MCF 10A (cell line): ENCODE measurements at regions of chr20 and their contacts with region 1.

Region 1: DNA sequence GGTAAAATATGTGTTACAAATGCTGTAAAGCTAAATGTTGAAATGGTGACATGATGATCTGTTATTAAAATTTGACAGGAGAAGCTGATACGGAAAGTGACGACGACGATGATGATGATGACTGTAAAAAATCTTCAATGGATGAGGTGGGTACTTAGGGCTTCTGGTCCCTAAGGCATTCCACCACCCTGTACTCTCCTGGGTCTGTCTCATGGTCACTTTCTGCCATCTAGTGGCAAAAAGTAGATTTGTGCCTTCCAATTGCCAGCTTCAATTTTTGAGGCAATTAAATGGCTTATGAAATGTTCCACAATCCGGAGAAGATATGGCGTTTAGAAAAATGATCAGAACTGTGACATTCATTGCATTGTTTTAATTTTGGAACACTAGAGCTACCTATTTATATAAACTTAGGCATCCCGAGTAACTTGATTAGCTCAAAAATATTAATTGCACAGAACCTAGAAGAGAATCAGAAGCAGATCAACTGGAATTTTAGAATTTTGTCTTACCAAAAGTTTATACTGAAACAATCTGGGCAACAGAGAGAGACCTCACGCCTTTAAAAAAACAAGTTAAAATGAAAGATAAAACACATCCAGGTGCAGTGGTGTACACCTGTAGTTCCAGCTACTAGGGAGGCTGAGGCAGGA is 346.5 kb upstream of the PLCB4 start:
- DNase-seq: peak; percentile 75
- H3K4me3 Mint-ChIP-seq: no peak overlapping the region
- H3K27ac Mint-ChIP-seq: no peak overlapping the region
- H3K4me1 Mint-ChIP-seq: peaks cover 11% of the 10 kb centered on the region
- H3K27me3 Mint-ChIP-seq: no peaks in the 10 kb centered on the region
- CTCF ChIP-seq: peak; percentile 75

Region 2: GRCh38 chr20:7950387-7950786 is 772.0 kb before region 1 on chr20:
- CTCF ChIA-PET with region 1: interaction called, 12 read pairs
- POLR2A ChIA-PET with region 1: no interaction called
- intact Hi-C with region 1: no loop called
- DNase-seq: no peak
- H3K4me3 Mint-ChIP-seq: no peak overlapping the region
- H3K27ac Mint-ChIP-seq: no peak overlapping the region
- H3K4me1 Mint-ChIP-seq: no peaks in the 10 kb centered on the region
- H3K27me3 Mint-ChIP-seq: no peaks in the 10 kb centered on the region
- CTCF ChIP-seq: no peak

Region 3: GRCh38 chr20:7989379-7989778 is 733.0 kb before region 1 on chr20:
- CTCF ChIA-PET with region 1: interaction called, 35 read pairs
- POLR2A ChIA-PET with region 1: no interaction called
- intact Hi-C with region 1: no loop called
- DNase-seq: no peak
- H3K4me3 Mint-ChIP-seq: no peak overlapping the region
- H3K27ac Mint-ChIP-seq: no peak overlapping the region
- H3K4me1 Mint-ChIP-seq: no peaks in the 10 kb centered on the region
- H3K27me3 Mint-ChIP-seq: no peaks in the 10 kb centered on the region
- CTCF ChIP-seq: no peak

Region 4: GRCh38 chr20:8131598-8132483 is 590.6 kb before region 1 on chr20 and contains the start of gene PLCB1:
- CTCF ChIA-PET with region 1: interaction called, 357 read pairs
- POLR2A ChIA-PET with region 1: interaction called, 3 read pairs
- intact Hi-C with region 1: loop called (anchors 1 kb)
- DNase-seq: peak; percentile 79
- H3K4me3 Mint-ChIP-seq: peak within 1 kb of the TSS; percentile 75
- H3K27ac Mint-ChIP-seq: peak within 1 kb of the TSS; percentile 43
- H3K4me1 Mint-ChIP-seq: peaks cover 8% of the 10 kb centered on the region
- H3K27me3 Mint-ChIP-seq: peaks cover 15% of the 10 kb centered on the region
- CTCF ChIP-seq: peak; percentile 95
- total RNA-seq, gene PLCB1: 5.9 and 8.2 TPM in 2 replicates

Region 5: GRCh38 chr20:8361006-8361652 is 361.3 kb before region 1 on chr20:
- CTCF ChIA-PET with region 1: interaction called, 38 read pairs
- POLR2A ChIA-PET with region 1: no interaction called
- intact Hi-C with region 1: no loop called
- DNase-seq: peak; percentile 23
- H3K4me3 Mint-ChIP-seq: no peak overlapping the region
- H3K27ac Mint-ChIP-seq: no peak overlapping the region
- H3K4me1 Mint-ChIP-seq: no peaks in the 10 kb centered on the region
- H3K27me3 Mint-ChIP-seq: no peaks in the 10 kb centered on the region
- CTCF ChIP-seq: no peak

Region 6: DNA sequence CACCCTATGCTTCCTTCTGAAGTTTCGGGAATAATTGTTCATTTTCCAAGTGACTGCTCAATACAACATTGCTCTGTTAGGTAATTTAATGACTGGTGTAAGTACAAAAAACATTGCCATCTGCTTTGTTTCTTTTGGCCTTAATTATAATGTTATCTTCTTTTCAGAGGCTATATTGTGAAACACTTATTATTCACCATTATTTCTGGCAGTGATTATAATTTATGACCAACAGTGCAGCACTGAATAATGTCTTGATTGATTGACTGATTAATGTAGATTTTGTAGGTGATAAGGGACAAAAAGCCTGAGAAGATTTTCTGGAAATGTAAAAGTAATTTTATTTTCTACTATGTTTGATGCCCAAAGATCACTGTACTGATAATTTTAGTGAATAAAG is 212.6 kb before region 1 on chr20:
- CTCF ChIA-PET with region 1: no interaction called
- POLR2A ChIA-PET with region 1: no interaction called
- intact Hi-C with region 1: no loop called
- DNase-seq: peak; percentile 51
- H3K4me3 Mint-ChIP-seq: peak overlapping the region; percentile 59
- H3K27ac Mint-ChIP-seq: peak overlapping the region; percentile 4
- H3K4me1 Mint-ChIP-seq: peaks cover 13% of the 10 kb centered on the region
- H3K27me3 Mint-ChIP-seq: no peaks in the 10 kb centered on the region
- CTCF ChIP-seq: no peak

Region 7: DNA sequence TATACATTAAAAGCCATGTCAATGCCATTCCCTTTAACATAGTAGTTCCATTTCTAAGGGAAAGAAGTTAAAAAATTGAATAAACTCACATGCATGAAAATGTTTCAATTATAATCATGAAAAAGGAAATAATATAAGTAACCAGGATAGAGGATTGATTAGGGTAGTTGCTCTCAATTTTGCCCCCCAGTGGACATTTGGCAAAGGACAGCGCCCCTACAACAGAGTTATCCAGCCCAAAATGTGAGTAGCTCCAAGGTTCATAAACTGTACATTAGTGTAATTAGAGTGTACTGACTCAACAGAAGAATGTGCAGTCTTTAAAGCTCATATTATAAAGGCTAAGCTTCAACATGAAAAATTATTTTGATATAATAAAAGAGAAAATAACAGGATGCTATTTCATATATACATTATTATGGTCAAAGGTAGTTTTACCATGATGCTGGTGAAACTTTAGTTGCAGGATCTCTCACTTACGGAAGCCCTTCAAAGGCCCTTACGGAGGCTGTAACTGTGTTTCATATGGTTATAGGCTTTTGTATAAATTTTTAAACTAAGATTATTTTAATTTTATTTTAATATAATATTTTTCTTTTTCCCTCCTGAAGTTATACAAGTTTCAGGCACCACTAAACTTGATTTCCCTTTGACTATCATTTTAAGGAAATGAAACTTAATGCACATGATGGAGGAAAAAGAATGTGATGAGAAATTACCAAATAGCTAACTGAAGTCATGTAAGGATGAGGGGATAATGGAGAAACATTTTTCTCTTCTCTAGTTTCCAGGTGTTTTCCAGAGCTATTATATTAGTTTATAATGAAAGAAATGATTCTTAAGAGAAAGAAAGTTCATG is 186.8 kb before region 1 on chr20:
- CTCF ChIA-PET with region 1: interaction called, 35 read pairs
- POLR2A ChIA-PET with region 1: no interaction called
- intact Hi-C with region 1: loop called (anchors 5 kb)
- DNase-seq: peak; percentile 38
- H3K4me3 Mint-ChIP-seq: no peak overlapping the region
- H3K27ac Mint-ChIP-seq: no peak overlapping the region
- H3K4me1 Mint-ChIP-seq: peaks cover 5% of the 10 kb centered on the region
- H3K27me3 Mint-ChIP-seq: no peaks in the 10 kb centered on the region
- CTCF ChIP-seq: peak; percentile 42

Region 8: DNA sequence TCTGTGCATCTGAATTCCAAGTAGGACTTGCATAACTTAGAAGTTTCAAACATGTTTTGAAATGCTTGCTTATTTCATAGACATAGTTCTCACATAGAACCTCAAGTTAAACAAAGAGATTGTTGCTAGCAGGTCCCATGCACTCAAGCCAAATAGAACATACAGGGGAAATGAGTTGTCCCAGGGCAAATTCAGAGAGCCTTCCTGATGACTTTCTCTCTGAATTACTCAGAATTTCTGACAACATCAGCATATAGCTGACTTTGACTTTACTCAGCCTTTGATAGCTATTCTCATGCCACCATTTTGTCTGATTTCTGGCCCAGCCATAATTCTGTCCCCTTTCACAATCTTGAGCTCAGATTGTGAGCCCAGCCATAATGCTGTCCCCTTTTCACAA is 13.3 kb after region 1 on chr20:
- CTCF ChIA-PET with region 1: interaction called, 20 read pairs
- POLR2A ChIA-PET with region 1: no interaction called
- intact Hi-C with region 1: no loop called
- DNase-seq: no peak
- H3K4me3 Mint-ChIP-seq: no peak overlapping the region
- H3K27ac Mint-ChIP-seq: no peak overlapping the region
- H3K4me1 Mint-ChIP-seq: no peaks in the 10 kb centered on the region
- H3K27me3 Mint-ChIP-seq: no peaks in the 10 kb centered on the region
- CTCF ChIP-seq: no peak

Region 9: DNA sequence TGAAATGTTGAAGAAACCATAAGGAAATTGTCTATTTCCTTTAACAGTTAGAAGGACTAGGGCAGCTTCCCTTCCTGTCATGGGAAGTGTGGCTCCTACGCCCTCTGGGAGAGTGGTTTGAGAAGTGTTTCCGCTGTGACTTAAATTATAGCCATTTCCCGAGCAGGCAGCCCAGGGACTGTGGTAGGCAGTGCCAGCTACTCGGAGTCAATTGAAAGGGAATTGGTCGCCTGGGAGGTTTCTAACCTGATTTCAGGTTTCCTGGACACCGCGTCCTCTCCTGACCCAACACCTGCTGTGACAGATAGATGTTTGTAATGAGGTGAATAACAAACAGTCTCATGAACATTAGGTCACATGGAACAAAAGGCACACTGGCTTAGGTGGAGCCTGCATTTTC is 90.4 kb after region 1 on chr20:
- CTCF ChIA-PET with region 1: no interaction called
- POLR2A ChIA-PET with region 1: no interaction called
- intact Hi-C with region 1: no loop called
- DNase-seq: no peak
- H3K4me3 Mint-ChIP-seq: no peak overlapping the region
- H3K27ac Mint-ChIP-seq: no peak overlapping the region
- H3K4me1 Mint-ChIP-seq: no peaks in the 10 kb centered on the region
- H3K27me3 Mint-ChIP-seq: peaks cover 11% of the 10 kb centered on the region
- CTCF ChIP-seq: no peak

Region 10: GRCh38 chr20:8976303-8976702 is 253.9 kb after region 1 on chr20:
- CTCF ChIA-PET with region 1: no interaction called
- POLR2A ChIA-PET with region 1: no interaction called
- intact Hi-C with region 1: no loop called
- DNase-seq: no peak
- H3K4me3 Mint-ChIP-seq: no peak overlapping the region
- H3K27ac Mint-ChIP-seq: no peak overlapping the region
- H3K4me1 Mint-ChIP-seq: no peaks in the 10 kb centered on the region
- H3K27me3 Mint-ChIP-seq: no peaks in the 10 kb centered on the region
- CTCF ChIP-seq: no peak